Right lobe of liver (tissue), 6 donors: ENCODE measurements at regions of chr15 and their contacts with region 1.

Region 1: GRCh38 chr15:89556413-89557262 is 18.6 kb upstream of the TICRR start:
- DNase-seq: peak in 1 of 3 donors; percentile 58
- ATAC-seq: peak; percentile 79 to 89 (median 84)
- H3K4me3 ChIP-seq: no peak overlapping the region
- H3K27ac ChIP-seq: no peak overlapping the region
- H3K4me1 ChIP-seq: no peaks in the 10 kb centered on the region
- H3K27me3 ChIP-seq: no peaks in the 10 kb centered on the region
- CTCF ChIP-seq: peak; percentile 63 to 85 (median 81)
- POLR2A ChIP-seq: no peak

Region 2: GRCh38 chr15:89496155-89497098 is 60.2 kb before region 1 on chr15 and contains the start of gene RHCG:
- intact Hi-C with region 1: loop called (anchors 10 kb)
- DNase-seq: peak; percentile 46 to 58 (median 47)
- ATAC-seq: peak; percentile 55 to 77 (median 72)
- H3K4me3 ChIP-seq: peak within 1 kb of the TSS in 2 of 3 donors; percentile 21 to 40
- H3K27ac ChIP-seq: no peak within 1 kb of the TSS
- H3K4me1 ChIP-seq: no peaks in the 10 kb centered on the region
- H3K27me3 ChIP-seq: no peaks in the 10 kb centered on the region
- CTCF ChIP-seq: peak; percentile 20 to 43 (median 35)
- POLR2A ChIP-seq: no peak
- total RNA-seq, gene RHCG: 0.20 to 0.82 (median 0.37) TPM in 5 of 6 experiments, not detected in the other